Psoas muscle (tissue), 8 donors: ENCODE measurements at regions of chr19 and their contacts with region 1.

Region 1: GRCh38 chr19:46840136-46840942 is 10.3 kb downstream of the AP2S1 start:
- DNase-seq: peak; percentile 39 to 72
- ATAC-seq: peak; percentile 49 to 85 (median 72)
- H3K4me3 ChIP-seq: no peak overlapping the region
- H3K27ac ChIP-seq: peak overlapping the region; percentile 2
- H3K4me1 ChIP-seq: no peaks in the 10 kb centered on the region
- H3K27me3 ChIP-seq: no peaks in the 10 kb centered on the region
- CTCF ChIP-seq: peak; percentile 79

Region 2: DNA sequence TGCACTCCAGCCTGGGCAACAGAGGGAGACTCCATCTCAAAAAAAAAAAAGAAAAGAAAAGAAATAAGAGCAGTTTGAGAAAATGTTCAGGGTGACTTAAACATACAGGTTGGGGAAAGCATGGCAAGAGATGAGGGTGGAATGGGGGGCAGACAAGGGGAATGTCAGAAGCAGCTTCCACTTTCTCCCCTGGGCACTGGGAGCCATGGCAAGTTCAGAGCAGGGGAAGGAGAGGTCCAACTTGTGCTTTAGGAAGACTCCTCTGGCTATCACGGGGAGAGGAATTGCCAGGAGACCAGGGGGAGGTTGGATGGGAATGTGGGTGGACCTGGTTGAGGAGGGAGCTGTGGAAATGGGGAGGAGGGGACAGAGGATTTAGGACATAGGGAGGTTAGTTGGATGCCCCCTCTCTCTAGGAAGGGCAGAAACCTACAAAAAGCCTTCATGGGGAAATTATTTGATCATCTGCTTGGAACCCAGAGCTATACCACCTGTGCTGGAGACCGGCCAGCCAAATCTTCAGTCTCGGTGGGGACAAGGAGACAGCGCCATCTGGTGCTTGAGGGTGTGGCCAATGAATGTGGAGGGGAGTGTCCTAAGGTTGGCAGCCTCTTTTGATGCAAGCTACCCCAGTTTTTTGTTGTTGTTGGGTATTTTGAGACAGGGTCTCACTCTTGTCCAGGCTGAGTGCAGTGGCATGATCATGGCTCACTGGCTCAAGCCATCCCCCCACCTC is 86.8 kb before region 1 on chr19:
- intact Hi-C with region 1: loop called (anchors 2 kb)
- DNase-seq: peak in 1 of 2 donors; percentile 40
- ATAC-seq: peak in 2 of 4 donors; percentile 35 to 49
- H3K4me3 ChIP-seq: no peak overlapping the region
- H3K27ac ChIP-seq: no peak overlapping the region
- H3K4me1 ChIP-seq: no peaks in the 10 kb centered on the region
- H3K27me3 ChIP-seq: no peaks in the 10 kb centered on the region
- CTCF ChIP-seq: peak; percentile 39